ENCODE measurements at regions of chr11 and their contacts with region 1.

Region 1: GRCh38 chr11:117843666-117844484 is 19.3 kb upstream of the FXYD2 start:
- DNase-seq: peak; percentile 61 to 91 (median 84)
- ATAC-seq: peak; percentile 97
- H3K4me3 ChIP-seq: no peak overlapping the region
- H3K4me3 Mint-ChIP-seq: no peak overlapping the region
- H3K27ac ChIP-seq: no peak overlapping the region
- H3K27ac Mint-ChIP-seq: no peak overlapping the region
- H3K4me1 ChIP-seq: no peaks in the 10 kb centered on the region
- H3K4me1 Mint-ChIP-seq: peaks cover 4% of the 10 kb centered on the region
- H3K27me3 ChIP-seq: no peaks in the 10 kb centered on the region
- H3K27me3 Mint-ChIP-seq: no peaks in the 10 kb centered on the region
- CTCF ChIP-seq: peak; percentile 98

Region 2: GRCh38 chr11:117743123-117743815 is 100.6 kb before region 1 on chr11:
- CTCF ChIA-PET with region 1: no interaction called
- POLR2A ChIA-PET with region 1: no interaction called
- intact Hi-C with region 1: no loop called
- DNase-seq: peak in 2 of 9 experiments; percentile 15 to 22
- ATAC-seq: no peak
- H3K4me3 ChIP-seq: no peak overlapping the region
- H3K4me3 Mint-ChIP-seq: no peak overlapping the region
- H3K27ac ChIP-seq: no peak overlapping the region
- H3K27ac Mint-ChIP-seq: no peak overlapping the region
- H3K4me1 ChIP-seq: no peaks in the 10 kb centered on the region
- H3K4me1 Mint-ChIP-seq: peaks cover 5% of the 10 kb centered on the region
- H3K27me3 ChIP-seq: no peaks in the 10 kb centered on the region
- H3K27me3 Mint-ChIP-seq: peaks cover 13% of the 10 kb centered on the region
- CTCF ChIP-seq: no peak

Region 3: GRCh38 chr11:117817368-117818040 is 26.4 kb before region 1 on chr11:
- CTCF ChIA-PET with region 1: interaction called, 38 read pairs
- POLR2A ChIA-PET with region 1: no interaction called
- intact Hi-C with region 1: no loop called
- DNase-seq: peak; percentile 73 to 90 (median 85)
- ATAC-seq: peak; percentile 24
- H3K4me3 ChIP-seq: no peak overlapping the region
- H3K4me3 Mint-ChIP-seq: no peak overlapping the region
- H3K27ac ChIP-seq: peak overlapping the region in 1 of 2 experiments; percentile 83
- H3K27ac Mint-ChIP-seq: peak overlapping the region; percentile 80
- H3K4me1 ChIP-seq: peaks cover 60% of the 10 kb centered on the region
- H3K4me1 Mint-ChIP-seq: peaks cover 59% of the 10 kb centered on the region
- H3K27me3 ChIP-seq: no peaks in the 10 kb centered on the region
- H3K27me3 Mint-ChIP-seq: no peaks in the 10 kb centered on the region
- CTCF ChIP-seq: peak; percentile 96

Region 4: DNA sequence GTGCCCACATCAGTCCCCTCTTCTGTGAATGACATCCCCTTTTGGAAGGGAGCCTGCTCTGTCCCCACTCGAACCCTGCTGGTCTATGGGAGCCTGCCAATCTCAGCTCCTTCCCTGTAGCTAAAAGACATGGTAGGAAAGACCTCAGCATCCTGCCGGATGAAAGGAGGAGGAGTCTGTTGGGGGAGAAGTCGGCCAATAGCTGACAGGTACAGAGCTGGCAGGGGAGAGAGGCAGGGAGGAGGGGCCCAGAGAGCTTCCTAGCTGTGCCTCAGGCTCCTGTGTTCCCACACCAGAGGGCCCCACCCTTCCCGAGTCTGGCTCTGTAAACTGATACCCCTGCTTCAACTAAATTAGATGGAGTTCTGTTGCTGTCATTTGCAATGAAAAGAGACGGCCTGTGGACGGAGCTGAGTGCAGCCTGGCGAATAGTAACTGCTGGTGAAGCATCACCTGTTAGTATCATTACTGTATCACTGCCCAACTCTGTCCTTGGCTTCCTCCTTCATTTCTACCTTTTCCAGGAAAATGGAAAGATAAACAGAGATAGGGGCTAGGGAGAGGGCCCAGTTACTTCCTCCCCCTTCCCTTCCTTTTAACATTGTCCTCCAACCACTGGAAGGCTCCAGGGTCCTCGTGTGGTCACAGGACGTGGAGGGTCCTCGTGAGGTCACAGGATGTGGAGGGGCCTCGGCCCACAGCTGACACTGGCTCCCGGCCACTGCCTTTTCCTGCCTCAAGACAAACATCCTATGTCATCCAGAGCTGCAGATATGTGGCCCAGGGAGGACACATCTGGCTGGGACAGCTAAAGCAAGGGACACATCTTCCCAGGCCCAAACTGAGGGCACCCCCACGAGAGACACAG is 17.5 kb after region 1 on chr11:
- CTCF ChIA-PET with region 1: interaction called, 16 read pairs
- POLR2A ChIA-PET with region 1: no interaction called
- intact Hi-C with region 1: no loop called
- DNase-seq: peak in 2 of 9 experiments; percentile 8 to 29
- ATAC-seq: no peak
- H3K4me3 ChIP-seq: no peak overlapping the region
- H3K4me3 Mint-ChIP-seq: no peak overlapping the region
- H3K27ac ChIP-seq: no peak overlapping the region
- H3K27ac Mint-ChIP-seq: no peak overlapping the region
- H3K4me1 ChIP-seq: no peaks in the 10 kb centered on the region
- H3K4me1 Mint-ChIP-seq: no peaks in the 10 kb centered on the region
- H3K27me3 ChIP-seq: no peaks in the 10 kb centered on the region
- H3K27me3 Mint-ChIP-seq: peaks cover 2% of the 10 kb centered on the region
- CTCF ChIP-seq: no peak

Region 5: DNA sequence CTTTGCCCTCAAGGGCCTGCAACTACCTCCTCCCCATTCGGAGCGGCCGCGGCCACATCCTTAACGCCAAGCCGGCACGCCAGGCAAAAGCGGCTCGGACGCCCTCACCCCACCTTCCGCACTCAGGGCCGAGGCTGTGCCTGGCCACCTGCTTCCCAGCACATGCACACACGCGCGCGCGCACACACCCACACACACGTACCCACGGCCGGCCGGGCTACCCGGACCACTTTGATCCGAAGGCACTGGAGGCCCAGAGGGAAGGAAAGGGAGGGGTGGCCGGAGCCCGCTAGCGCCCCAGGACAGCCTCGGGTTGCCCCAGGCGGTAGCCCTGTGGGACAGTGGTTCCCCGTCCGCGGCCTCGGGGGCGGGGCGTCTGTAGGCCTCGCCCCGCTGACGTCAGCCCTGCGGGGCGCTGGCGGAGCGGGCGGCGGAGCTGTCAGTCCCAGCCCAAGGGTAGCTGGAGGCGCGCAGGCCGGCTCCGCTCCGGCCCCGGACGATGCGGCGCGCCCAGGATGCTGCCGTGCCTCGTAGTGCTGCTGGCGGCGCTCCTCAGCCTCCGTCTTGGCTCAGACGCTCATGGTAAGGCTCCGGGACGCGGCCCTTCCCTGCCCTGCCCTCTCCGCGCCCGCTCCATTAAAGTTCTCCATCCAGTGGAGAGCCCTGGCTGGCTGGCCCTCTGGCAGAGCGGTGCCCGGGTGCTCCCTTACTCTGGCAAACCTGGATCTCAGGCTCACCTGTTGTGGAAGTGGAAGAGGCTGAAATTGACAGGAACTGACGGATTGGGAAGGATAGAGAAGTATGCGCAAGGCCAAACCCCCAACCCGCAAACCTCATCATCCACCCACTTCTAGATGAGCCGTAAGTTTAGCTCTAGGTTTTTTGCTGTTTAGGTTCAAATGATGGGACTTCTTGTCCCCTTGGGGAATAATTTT is 142.3 kb after region 1 on chr11 and contains the start of gene IL10RA:
- CTCF ChIA-PET with region 1: interaction called, 15 read pairs
- POLR2A ChIA-PET with region 1: interaction called, 5 read pairs
- intact Hi-C with region 1: no loop called
- DNase-seq: peak; percentile 66 to 92 (median 80)
- ATAC-seq: peak; percentile 75
- H3K4me3 ChIP-seq: peak within 1 kb of the TSS; percentile 81 to 100
- H3K4me3 Mint-ChIP-seq: peak within 1 kb of the TSS; percentile 89
- H3K27ac ChIP-seq: peak within 1 kb of the TSS; percentile 88
- H3K27ac Mint-ChIP-seq: peak within 1 kb of the TSS; percentile 92
- H3K4me1 ChIP-seq: peaks cover 57% of the 10 kb centered on the region
- H3K4me1 Mint-ChIP-seq: peaks cover 72% of the 10 kb centered on the region
- H3K27me3 ChIP-seq: no peaks in the 10 kb centered on the region
- H3K27me3 Mint-ChIP-seq: no peaks in the 10 kb centered on the region
- CTCF ChIP-seq: no peak
- total RNA-seq, gene IL10RA: 295 to 299 TPM

Region 6: DNA sequence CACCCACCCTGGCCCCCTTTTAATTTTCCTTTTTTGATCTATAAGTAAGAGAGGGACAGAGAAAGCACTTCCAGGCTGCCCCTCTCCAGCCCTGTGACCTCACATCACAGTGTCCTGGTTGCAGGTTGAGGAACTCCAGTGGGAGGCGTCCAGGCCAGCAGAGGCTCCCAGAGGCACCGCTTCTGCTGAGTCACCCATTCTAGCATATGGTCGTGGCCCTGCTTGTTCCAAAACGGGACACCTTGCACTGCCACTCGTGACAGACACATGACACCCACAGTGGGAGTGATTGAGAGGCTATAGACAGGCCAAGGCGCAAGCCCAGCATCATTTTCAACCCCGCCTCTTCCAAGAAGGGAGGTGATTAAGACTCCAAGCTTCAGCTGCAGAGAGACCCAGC is 217.0 kb after region 1 on chr11:
- CTCF ChIA-PET with region 1: interaction called, 213 read pairs
- POLR2A ChIA-PET with region 1: no interaction called
- intact Hi-C with region 1: no loop called
- DNase-seq: no peak
- ATAC-seq: no peak
- H3K4me3 ChIP-seq: no peak overlapping the region
- H3K4me3 Mint-ChIP-seq: no peak overlapping the region
- H3K27ac ChIP-seq: no peak overlapping the region
- H3K27ac Mint-ChIP-seq: no peak overlapping the region
- H3K4me1 ChIP-seq: no peaks in the 10 kb centered on the region
- H3K4me1 Mint-ChIP-seq: no peaks in the 10 kb centered on the region
- H3K27me3 ChIP-seq: no peaks in the 10 kb centered on the region
- H3K27me3 Mint-ChIP-seq: no peaks in the 10 kb centered on the region
- CTCF ChIP-seq: no peak